Activated CD4-positive, alpha-beta memory T cell treated with anti-CD3 and anti-CD28 coated beads for 36 hours (primary cell): ENCODE measurements at regions of chr1 and their contacts with region 1.

Region 1: GRCh38 chr1:155989242-155990004 is 11.1 kb upstream of the ARHGEF2 start:
- DNase-seq: peak; percentile 88
- H3K4me3 Mint-ChIP-seq: no peak overlapping the region
- H3K27ac Mint-ChIP-seq: no peak overlapping the region
- H3K4me1 Mint-ChIP-seq: peaks cover 6% of the 10 kb centered on the region
- H3K27me3 Mint-ChIP-seq: no peaks in the 10 kb centered on the region

Region 2: DNA sequence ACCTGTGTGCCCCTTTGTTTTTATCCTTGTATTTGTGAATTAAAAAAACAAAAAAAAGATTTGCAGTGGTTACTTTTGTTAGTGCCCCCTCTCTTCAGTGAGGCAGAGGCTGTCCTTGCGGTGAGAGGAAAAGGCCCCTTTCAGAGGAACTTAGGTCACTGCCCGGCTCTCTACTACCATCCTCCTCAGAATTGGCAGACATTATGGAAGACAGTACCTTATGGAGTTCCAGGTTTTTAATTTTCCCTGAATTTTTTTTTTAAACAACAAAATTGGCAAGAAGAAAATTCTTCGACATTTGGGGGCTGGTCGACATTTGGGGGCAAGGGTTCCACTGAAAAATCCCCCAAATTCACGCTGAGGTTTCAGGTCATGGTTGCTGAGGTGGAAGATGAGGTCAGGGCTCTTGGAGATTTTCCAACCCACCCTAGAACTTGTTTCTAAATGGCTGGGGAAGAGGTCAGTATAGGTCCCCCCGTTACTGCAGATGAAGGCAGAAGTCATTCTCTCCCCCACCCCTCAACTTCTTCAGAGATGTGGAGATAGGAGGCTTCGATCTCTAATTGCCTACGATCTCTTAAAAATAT is 42.7 kb before region 1 on chr1:
- CTCF ChIA-PET with region 1: interaction called, 16 read pairs
- POLR2A ChIA-PET with region 1: no interaction called
- intact Hi-C with region 1: loop called (anchors 2 kb)
- DNase-seq: no peak
- H3K4me3 Mint-ChIP-seq: peak overlapping the region; percentile 65
- H3K27ac Mint-ChIP-seq: peak overlapping the region; percentile 98
- H3K4me1 Mint-ChIP-seq: peaks cover 50% of the 10 kb centered on the region
- H3K27me3 Mint-ChIP-seq: no peaks in the 10 kb centered on the region

Region 3: DNA sequence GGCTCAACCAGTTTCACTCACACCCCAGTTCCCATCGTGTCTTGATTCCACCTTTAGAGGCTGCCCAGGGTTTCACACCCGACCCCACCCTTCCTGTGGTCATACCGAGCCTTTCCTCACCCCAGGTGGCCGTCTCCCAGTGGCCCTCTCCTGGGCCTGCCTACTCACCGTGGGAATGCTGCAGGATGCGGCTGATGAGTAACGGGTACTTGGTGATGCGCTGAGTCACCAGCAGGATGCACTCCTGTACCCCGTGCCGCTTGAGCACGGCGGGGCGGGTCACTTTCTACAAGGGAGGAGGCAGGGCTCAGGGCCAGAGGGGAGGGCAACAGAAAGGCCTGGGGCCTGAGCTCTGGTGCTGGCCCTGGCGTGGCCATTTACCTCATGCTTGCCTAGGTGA is 27.5 kb before region 1 on chr1:
- CTCF ChIA-PET with region 1: interaction called, 11 read pairs
- POLR2A ChIA-PET with region 1: no interaction called
- intact Hi-C with region 1: no loop called
- DNase-seq: peak; percentile 47
- H3K4me3 Mint-ChIP-seq: no peak overlapping the region
- H3K27ac Mint-ChIP-seq: peak overlapping the region; percentile 75
- H3K4me1 Mint-ChIP-seq: peaks cover 14% of the 10 kb centered on the region
- H3K27me3 Mint-ChIP-seq: no peaks in the 10 kb centered on the region

Region 4: GRCh38 chr1:155978325-155978972 is 11.0 kb before region 1 on chr1 and contains the start of gene ARHGEF2:
- CTCF ChIA-PET with region 1: interaction called, 63 read pairs
- POLR2A ChIA-PET with region 1: interaction called, 3 read pairs
- intact Hi-C with region 1: loop called (anchors 1 kb)
- DNase-seq: peak; percentile 88
- H3K4me3 Mint-ChIP-seq: peak within 1 kb of the TSS; percentile 96
- H3K27ac Mint-ChIP-seq: peak within 1 kb of the TSS; percentile 96
- H3K4me1 Mint-ChIP-seq: peaks cover 66% of the 10 kb centered on the region
- H3K27me3 Mint-ChIP-seq: no peaks in the 10 kb centered on the region
- total RNA-seq, gene ARHGEF2: 165 to 174 TPM

Region 5: GRCh38 chr1:156001682-156002171 is 12.3 kb after region 1 on chr1:
- CTCF ChIA-PET with region 1: interaction called, 19 read pairs
- POLR2A ChIA-PET with region 1: no interaction called
- intact Hi-C with region 1: no loop called
- DNase-seq: no peak
- H3K4me3 Mint-ChIP-seq: no peak overlapping the region
- H3K27ac Mint-ChIP-seq: no peak overlapping the region
- H3K4me1 Mint-ChIP-seq: peaks cover 17% of the 10 kb centered on the region
- H3K27me3 Mint-ChIP-seq: no peaks in the 10 kb centered on the region

Region 6: GRCh38 chr1:156065212-156065611 is 75.8 kb after region 1 on chr1:
- CTCF ChIA-PET with region 1: interaction called, 14 read pairs
- POLR2A ChIA-PET with region 1: no interaction called
- intact Hi-C with region 1: no loop called
- DNase-seq: no peak
- H3K4me3 Mint-ChIP-seq: no peak overlapping the region
- H3K27ac Mint-ChIP-seq: no peak overlapping the region
- H3K4me1 Mint-ChIP-seq: peaks cover 20% of the 10 kb centered on the region
- H3K27me3 Mint-ChIP-seq: no peaks in the 10 kb centered on the region